ENCODE measurements at regions of chr10 and their contacts with region 1.

Region 1: GRCh38 chr10:119041326-119041725 is 11.8 kb downstream of the NANOS1 start:
- DNase-seq: no peak
- ATAC-seq: no peak
- H3K4me3 ChIP-seq: no peak overlapping the region
- H3K27ac ChIP-seq: no peak overlapping the region
- H3K4me1 ChIP-seq: no peaks in the 10 kb centered on the region
- H3K27me3 ChIP-seq: no peaks in the 10 kb centered on the region

Region 2: DNA sequence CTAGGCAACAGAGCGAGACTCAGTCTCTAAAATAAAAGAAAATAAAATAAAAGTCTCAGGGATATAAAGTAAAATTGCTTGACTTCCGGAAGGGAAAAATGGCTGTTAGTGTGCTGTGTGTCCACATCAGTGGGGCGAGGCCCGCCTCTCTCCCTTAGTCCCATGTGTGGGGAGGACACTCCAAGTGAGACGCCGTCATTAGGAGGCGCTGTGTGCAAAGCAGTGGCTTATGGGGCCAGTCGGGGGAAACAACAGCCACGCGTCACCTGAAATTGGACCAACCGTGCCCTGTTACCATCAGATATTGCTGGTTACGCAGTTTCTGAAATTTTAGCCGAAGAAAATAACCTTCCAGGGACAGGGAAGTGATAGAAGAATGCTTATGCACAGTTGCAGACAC is 108.4 kb after region 1 on chr10:
- intact Hi-C with region 1: loop called in 1 of 4 experiments (anchors 10 kb)
- DNase-seq: no peak
- ATAC-seq: no peak
- H3K4me3 ChIP-seq: no peak overlapping the region
- H3K27ac ChIP-seq: no peak overlapping the region
- H3K4me1 ChIP-seq: no peaks in the 10 kb centered on the region
- H3K27me3 ChIP-seq: no peaks in the 10 kb centered on the region

Measured in right cardiac atrium (tissue), 5 donors.